Activated CD4-positive, alpha-beta T cell treated with anti-CD3 and anti-CD28 coated beads, Interleukin-2, amount 10 ng/mL, durations not matched to agents 24 days and 14 days (primary cell): ENCODE measurements at regions of chr6 and their contacts with region 1.

Region 1: GRCh38 chr6:15399641-15400470 is 154.0 kb downstream of the JARID2 start:
- DNase-seq: peak; percentile 63
- H3K4me3 Mint-ChIP-seq: peak overlapping the region; percentile 78
- H3K27ac Mint-ChIP-seq: peak overlapping the region; percentile 81
- H3K4me1 Mint-ChIP-seq: peaks cover 66% of the 10 kb centered on the region
- H3K27me3 Mint-ChIP-seq: no peaks in the 10 kb centered on the region

Region 2: DNA sequence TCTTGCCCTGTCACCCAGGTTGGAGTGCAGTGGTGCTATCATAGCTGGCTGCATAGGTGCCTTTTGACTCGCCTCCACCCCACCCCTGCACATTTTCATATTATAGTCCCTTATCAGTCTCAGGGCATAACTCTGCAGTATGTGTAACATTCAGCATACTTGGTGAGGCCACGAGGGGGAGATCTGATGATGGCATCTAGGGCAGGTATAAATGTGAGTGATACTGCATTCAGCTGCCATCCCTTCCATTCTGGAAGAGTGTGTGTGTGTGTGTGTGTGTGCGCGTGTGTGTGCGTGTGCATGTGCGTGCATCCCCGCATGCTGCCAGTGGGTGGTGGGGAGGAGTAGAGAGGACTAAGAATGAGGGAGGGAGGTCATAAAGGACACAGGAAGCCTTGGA is 72.6 kb before region 1 on chr6:
- intact Hi-C with region 1: loop called (anchors 5 kb)
- DNase-seq: peak; percentile 82
- H3K4me3 Mint-ChIP-seq: peak overlapping the region; percentile 7
- H3K27ac Mint-ChIP-seq: peak overlapping the region; percentile 21
- H3K4me1 Mint-ChIP-seq: peaks cover 73% of the 10 kb centered on the region
- H3K27me3 Mint-ChIP-seq: no peaks in the 10 kb centered on the region

Region 3: GRCh38 chr6:15365273-15365687 is 34.6 kb before region 1 on chr6:
- intact Hi-C with region 1: loop called (anchors 5 kb)
- DNase-seq: peak; percentile 75
- H3K4me3 Mint-ChIP-seq: peak overlapping the region; percentile 18
- H3K27ac Mint-ChIP-seq: peak overlapping the region; percentile 22
- H3K4me1 Mint-ChIP-seq: peaks cover 41% of the 10 kb centered on the region
- H3K27me3 Mint-ChIP-seq: no peaks in the 10 kb centered on the region

Region 4: GRCh38 chr6:15420959-15421438 is 21.1 kb after region 1 on chr6:
- intact Hi-C with region 1: loop called (anchors 2 kb)
- DNase-seq: peak; percentile 70
- H3K4me3 Mint-ChIP-seq: peak overlapping the region; percentile 84
- H3K27ac Mint-ChIP-seq: peak overlapping the region; percentile 95
- H3K4me1 Mint-ChIP-seq: peaks cover 63% of the 10 kb centered on the region
- H3K27me3 Mint-ChIP-seq: no peaks in the 10 kb centered on the region

Region 5: GRCh38 chr6:15441215-15441868 is 41.5 kb after region 1 on chr6:
- intact Hi-C with region 1: loop called (anchors 5 kb)
- DNase-seq: peak; percentile 84
- H3K4me3 Mint-ChIP-seq: no peak overlapping the region
- H3K27ac Mint-ChIP-seq: no peak overlapping the region
- H3K4me1 Mint-ChIP-seq: peaks cover 70% of the 10 kb centered on the region
- H3K27me3 Mint-ChIP-seq: no peaks in the 10 kb centered on the region

Region 6: DNA sequence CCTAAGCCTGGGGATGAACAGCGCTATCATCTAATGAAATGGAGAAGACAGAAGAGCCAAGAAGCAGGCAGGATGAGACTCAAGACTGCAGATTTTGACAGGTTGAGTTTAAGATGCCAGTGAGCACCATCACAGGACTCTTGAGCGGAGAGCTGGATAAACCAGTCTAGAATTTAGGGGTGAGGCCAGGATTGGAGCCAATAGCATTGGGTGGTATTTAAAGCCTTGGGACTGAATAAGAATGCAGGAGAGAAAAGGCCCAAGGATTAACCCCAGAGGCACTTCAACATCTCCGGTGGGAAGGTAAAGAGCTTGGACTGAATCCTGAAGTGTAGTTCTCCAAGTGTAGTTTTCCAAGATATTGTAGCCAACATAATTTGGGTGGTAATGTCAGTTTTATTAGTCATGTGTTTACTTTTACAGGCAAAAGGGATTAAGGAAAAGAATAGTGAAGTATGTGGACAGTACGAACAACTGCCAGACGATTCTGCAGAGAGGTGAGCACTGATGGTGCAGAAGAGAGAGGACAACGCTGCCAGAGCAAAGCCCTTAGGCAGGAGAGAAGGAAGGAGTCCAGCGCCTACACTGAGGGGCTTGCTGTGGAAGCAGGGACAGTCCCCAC is 177.8 kb after region 1 on chr6:
- intact Hi-C with region 1: no loop called
- DNase-seq: peak; percentile 37
- H3K4me3 Mint-ChIP-seq: no peak overlapping the region
- H3K27ac Mint-ChIP-seq: no peak overlapping the region
- H3K4me1 Mint-ChIP-seq: no peaks in the 10 kb centered on the region
- H3K27me3 Mint-ChIP-seq: no peaks in the 10 kb centered on the region